ENCODE measurements at regions of chr6 and their contacts with region 1.

Region 1: DNA sequence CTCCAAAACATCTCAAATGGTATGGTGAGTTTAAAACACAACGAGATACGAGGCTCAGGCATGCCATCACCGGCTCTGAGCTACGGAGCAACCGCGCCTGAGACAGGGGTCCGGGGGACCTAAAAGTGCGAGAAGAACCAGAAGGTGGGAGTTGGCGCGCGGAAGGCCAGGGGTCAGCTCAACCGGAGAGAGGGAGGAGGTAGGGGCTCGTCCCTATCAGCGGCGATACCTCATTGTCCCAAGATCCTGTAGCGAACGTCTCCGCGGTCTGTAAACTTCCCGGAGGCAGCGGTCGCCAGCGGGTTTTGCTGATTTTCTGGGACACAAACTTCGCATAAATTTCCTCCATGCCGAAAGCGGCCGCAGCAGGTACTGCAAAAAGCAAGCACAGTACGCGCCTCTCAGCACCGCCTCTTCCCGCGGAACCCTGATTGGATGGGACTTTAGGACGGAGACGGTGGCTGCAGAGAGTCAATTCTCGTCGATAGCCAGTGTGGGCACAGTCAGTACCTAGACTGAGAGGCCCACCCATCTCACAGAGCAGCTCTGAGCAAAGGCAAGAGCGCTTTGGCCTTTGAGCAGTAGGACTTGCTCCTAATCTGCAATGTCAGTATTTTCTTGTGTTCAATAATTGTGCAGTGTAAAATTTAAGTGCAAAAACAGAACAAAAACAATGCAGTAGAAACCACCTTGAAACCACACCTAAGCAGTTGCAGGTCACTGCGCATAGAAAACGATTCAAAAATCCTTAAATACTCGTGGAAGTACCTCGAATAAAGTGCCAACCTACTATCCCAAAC is at the start of gene NUP43:
- DNase-seq: peak; percentile 94
- H3K4me3 Mint-ChIP-seq: peak within 1 kb of the TSS; percentile 94
- H3K27ac Mint-ChIP-seq: peak within 1 kb of the TSS; percentile 80
- H3K4me1 Mint-ChIP-seq: peaks cover 8% of the 10 kb centered on the region
- H3K27me3 Mint-ChIP-seq: no peaks in the 10 kb centered on the region
- CTCF ChIP-seq: peak; percentile 33
- total RNA-seq, gene NUP43: 47.8 and 50.5 TPM in 2 replicates

Region 2: DNA sequence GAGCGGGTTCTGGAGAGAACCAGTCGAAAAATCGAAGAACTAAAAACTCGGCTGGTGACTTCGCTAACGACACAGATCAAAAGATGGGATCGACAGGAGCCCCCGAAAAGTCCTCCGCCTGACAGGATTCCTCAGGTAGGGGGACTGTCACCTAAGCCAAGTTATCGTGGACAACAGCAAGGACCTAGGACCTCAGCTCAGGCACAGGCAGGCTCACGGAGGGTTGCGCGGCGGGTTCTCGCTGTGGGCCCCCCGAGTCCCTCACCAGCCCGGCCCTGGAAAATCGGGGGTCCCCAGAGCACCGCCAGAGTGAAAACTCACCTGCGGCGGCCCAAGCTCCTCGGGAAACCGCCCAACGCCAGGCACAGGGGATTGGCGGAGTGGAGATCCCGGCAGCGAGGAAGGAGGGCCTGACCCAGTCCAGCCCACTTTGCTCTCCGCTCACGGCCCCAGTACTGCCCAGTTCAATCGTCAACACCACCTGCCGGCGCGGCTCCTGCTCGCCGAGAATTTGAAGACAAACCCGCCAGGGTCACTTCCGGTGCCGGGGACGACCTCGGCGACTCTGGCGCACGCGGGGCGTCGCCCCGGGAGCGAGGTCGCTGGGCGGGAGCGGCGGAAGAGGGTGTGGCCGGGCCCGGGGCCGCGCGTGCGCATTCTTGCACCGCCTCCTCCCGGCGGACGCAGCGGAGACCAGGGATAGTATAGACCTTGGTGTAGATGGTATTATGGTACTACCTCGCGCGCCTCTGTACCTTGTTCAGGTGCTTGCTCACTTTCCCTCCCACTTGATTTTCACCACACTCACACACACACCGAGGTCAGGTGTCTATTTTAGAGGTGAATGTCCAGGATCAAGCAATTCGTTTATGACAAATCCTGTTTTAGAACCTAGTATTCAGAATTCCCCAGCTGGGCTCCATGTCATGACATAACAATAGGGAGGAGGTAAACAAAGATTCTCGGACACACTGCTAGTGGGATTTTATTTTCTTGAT is 97.9 kb before region 1 on chr6 and contains the start of gene KATNA1:
- CTCF ChIA-PET with region 1: no interaction called
- POLR2A ChIA-PET with region 1: interaction called, 12 read pairs
- intact Hi-C with region 1: no loop called
- DNase-seq: peak; percentile 93
- H3K4me3 Mint-ChIP-seq: peak within 1 kb of the TSS; percentile 85
- H3K27ac Mint-ChIP-seq: peak within 1 kb of the TSS; percentile 82
- H3K4me1 Mint-ChIP-seq: peaks cover 6% of the 10 kb centered on the region
- H3K27me3 Mint-ChIP-seq: no peaks in the 10 kb centered on the region
- CTCF ChIP-seq: no peak
- total RNA-seq, gene KATNA1: 23.2 and 25.8 TPM in 2 replicates

Region 3: DNA sequence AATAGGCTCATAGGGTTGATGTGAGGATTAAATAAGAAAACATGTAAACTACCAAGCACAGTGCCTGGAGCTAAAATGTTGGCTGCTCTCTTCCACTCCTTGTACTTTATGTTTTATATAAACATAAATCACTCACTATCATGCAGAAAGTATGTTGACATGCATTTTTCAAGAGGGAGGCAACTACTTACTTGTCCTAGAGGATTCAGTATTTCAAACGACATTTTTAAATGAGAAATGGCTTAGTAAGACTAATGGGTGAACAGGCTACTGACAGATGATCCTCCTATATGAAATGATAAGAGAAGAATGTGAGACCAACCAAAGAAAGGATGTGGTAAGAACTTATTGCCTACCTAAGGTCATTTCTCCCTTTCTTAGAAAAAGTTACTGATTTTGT is 49.4 kb before region 1 on chr6:
- CTCF ChIA-PET with region 1: interaction called, 4 read pairs
- POLR2A ChIA-PET with region 1: interaction called, 12 read pairs
- intact Hi-C with region 1: no loop called
- DNase-seq: peak; percentile 21
- H3K4me3 Mint-ChIP-seq: no peak overlapping the region
- H3K27ac Mint-ChIP-seq: peak overlapping the region; percentile 87
- H3K4me1 Mint-ChIP-seq: peaks cover 14% of the 10 kb centered on the region
- H3K27me3 Mint-ChIP-seq: no peaks in the 10 kb centered on the region
- CTCF ChIP-seq: no peak

Region 4: GRCh38 chr6:149723771-149724417 is 22.5 kb before region 1 on chr6:
- CTCF ChIA-PET with region 1: interaction called, 10 read pairs
- POLR2A ChIA-PET with region 1: interaction called, 138 read pairs
- intact Hi-C with region 1: no loop called
- DNase-seq: peak; percentile 87
- H3K4me3 Mint-ChIP-seq: no peak overlapping the region
- H3K27ac Mint-ChIP-seq: no peak overlapping the region
- H3K4me1 Mint-ChIP-seq: peaks cover 6% of the 10 kb centered on the region
- H3K27me3 Mint-ChIP-seq: no peaks in the 10 kb centered on the region
- CTCF ChIP-seq: peak; percentile 82

Region 5: DNA sequence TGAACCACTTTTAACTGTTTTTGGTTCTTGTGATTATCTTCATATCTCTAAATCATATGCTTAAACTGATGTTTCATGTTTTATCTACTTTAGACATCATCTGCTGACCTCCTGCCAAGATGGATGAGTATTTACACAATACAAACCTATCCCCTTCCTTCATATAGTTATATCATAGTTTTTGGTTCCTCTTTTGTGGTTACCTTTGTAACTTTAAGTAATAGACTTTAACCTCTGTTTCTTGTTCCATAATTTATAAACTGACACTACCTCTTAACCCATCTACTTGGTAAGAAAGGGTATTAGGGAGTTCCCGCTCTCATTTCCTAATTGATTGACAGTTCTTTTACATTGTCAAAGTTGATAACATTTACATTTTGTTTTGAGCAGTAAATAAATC is 15.1 kb after region 1 on chr6:
- CTCF ChIA-PET with region 1: interaction called, 5 read pairs
- POLR2A ChIA-PET with region 1: interaction called, 17 read pairs
- intact Hi-C with region 1: no loop called
- DNase-seq: no peak
- H3K4me3 Mint-ChIP-seq: no peak overlapping the region
- H3K27ac Mint-ChIP-seq: no peak overlapping the region
- H3K4me1 Mint-ChIP-seq: peaks cover 32% of the 10 kb centered on the region
- H3K27me3 Mint-ChIP-seq: no peaks in the 10 kb centered on the region
- CTCF ChIP-seq: no peak

Region 6: GRCh38 chr6:149895833-149896271 is 149.5 kb after region 1 on chr6:
- CTCF ChIA-PET with region 1: interaction called, 4 read pairs
- POLR2A ChIA-PET with region 1: interaction called, 13 read pairs
- intact Hi-C with region 1: no loop called
- DNase-seq: peak; percentile 92
- H3K4me3 Mint-ChIP-seq: peak overlapping the region; percentile 41
- H3K27ac Mint-ChIP-seq: peak overlapping the region; percentile 85
- H3K4me1 Mint-ChIP-seq: peaks cover 69% of the 10 kb centered on the region
- H3K27me3 Mint-ChIP-seq: no peaks in the 10 kb centered on the region
- CTCF ChIP-seq: no peak